Prostate gland (tissue), 2 donors: ENCODE measurements at regions of chr3 and their contacts with region 1.

Region 1: GRCh38 chr3:148718982-148719862 is 21.5 kb downstream of the AGTR1 start:
- DNase-seq: no peak
- H3K4me3 ChIP-seq: no peak overlapping the region
- H3K27ac ChIP-seq: no peak overlapping the region
- H3K4me1 ChIP-seq: no peaks in the 10 kb centered on the region
- H3K27me3 ChIP-seq: no peaks in the 10 kb centered on the region
- CTCF ChIP-seq: peak in 3 of 4 experiments; percentile 36 to 46 (median 39)
- POLR2A ChIP-seq: no peak

Region 2: GRCh38 chr3:148379763-148380382 is 339.3 kb before region 1 on chr3:
- intact Hi-C with region 1: loop called (anchors 5 kb)
- DNase-seq: peak; percentile 5
- H3K4me3 ChIP-seq: no peak overlapping the region
- H3K27ac ChIP-seq: no peak overlapping the region
- H3K4me1 ChIP-seq: no peaks in the 10 kb centered on the region
- H3K27me3 ChIP-seq: no peaks in the 10 kb centered on the region
- CTCF ChIP-seq: peak in 3 of 4 experiments; percentile 41 to 66 (median 54)
- POLR2A ChIP-seq: no peak